Panc1 (cell line): ENCODE measurements at regions of chr2 and their contacts with region 1.

Region 1: GRCh38 chr2:180276733-180277132 is 269.6 kb upstream of the CWC22 start:
- DNase-seq: no peak
- ATAC-seq: no peak
- H3K4me3 ChIP-seq: no peak overlapping the region
- H3K27ac ChIP-seq: no peak overlapping the region
- H3K4me1 ChIP-seq: no peaks in the 10 kb centered on the region
- H3K27me3 ChIP-seq: no peaks in the 10 kb centered on the region
- CTCF ChIP-seq: no peak

Region 2: DNA sequence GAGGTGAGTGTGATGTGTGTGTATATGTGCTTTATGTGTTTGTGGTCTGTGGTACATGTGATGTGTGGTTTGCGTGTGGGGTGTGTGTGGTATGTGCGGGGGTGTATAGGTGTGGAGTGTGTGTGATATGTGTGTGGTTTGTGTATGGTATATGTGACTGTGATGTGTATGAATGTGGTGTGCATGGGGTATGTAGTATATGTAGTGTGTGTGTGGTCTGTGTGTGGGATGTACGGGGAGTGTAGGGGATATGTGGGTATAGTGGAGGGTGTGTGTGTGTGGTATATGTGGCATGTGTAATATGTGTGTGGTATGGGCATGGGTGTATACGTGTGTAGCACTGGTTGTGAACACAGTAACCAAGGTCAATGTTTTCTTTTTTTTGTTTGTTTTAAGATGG is 502.7 kb before region 1 on chr2:
- CTCF ChIA-PET with region 1: no interaction called
- POLR2A ChIA-PET with region 1: no interaction called
- in situ Hi-C with region 1: no loop called
- intact Hi-C with region 1: no loop called
- DNase-seq: no peak
- ATAC-seq: no peak
- H3K4me3 ChIP-seq: no peak overlapping the region
- H3K27ac ChIP-seq: no peak overlapping the region
- H3K4me1 ChIP-seq: no peaks in the 10 kb centered on the region
- H3K27me3 ChIP-seq: no peaks in the 10 kb centered on the region
- CTCF ChIP-seq: no peak

Region 3: DNA sequence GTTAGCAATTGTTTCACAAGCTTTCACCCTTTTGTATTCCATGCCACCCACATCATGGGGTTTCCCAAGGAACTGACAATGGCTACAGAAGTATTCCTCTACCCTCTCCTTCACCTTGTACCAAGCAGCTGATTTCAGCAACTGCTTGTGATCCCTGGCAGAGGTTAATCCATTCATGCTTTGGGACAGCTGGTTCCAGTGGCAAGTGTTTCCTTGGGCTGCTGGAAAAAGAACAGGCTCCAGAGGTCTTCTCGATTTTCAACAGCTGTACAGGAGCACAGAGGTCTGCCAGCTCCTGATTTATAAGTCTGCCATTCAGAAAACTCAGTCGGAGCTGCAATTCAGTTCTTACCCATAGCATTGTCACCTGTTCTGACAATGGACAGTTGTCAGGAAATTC is 30.5 kb before region 1 on chr2:
- CTCF ChIA-PET with region 1: no interaction called
- POLR2A ChIA-PET with region 1: no interaction called
- in situ Hi-C with region 1: no loop called
- intact Hi-C with region 1: no loop called
- DNase-seq: no peak
- ATAC-seq: no peak
- H3K4me3 ChIP-seq: no peak overlapping the region
- H3K27ac ChIP-seq: no peak overlapping the region
- H3K4me1 ChIP-seq: no peaks in the 10 kb centered on the region
- H3K27me3 ChIP-seq: no peaks in the 10 kb centered on the region
- CTCF ChIP-seq: no peak

Region 4: GRCh38 chr2:180842461-180842860 is 565.7 kb after region 1 on chr2:
- CTCF ChIA-PET with region 1: interaction called, 10 read pairs
- POLR2A ChIA-PET with region 1: no interaction called
- in situ Hi-C with region 1: no loop called
- intact Hi-C with region 1: no loop called
- DNase-seq: no peak
- ATAC-seq: no peak
- H3K4me3 ChIP-seq: no peak overlapping the region
- H3K27ac ChIP-seq: no peak overlapping the region
- H3K4me1 ChIP-seq: no peaks in the 10 kb centered on the region
- H3K27me3 ChIP-seq: no peaks in the 10 kb centered on the region
- CTCF ChIP-seq: no peak